ENCODE measurements at regions of chr17 and their contacts with region 1.

Region 1: DNA sequence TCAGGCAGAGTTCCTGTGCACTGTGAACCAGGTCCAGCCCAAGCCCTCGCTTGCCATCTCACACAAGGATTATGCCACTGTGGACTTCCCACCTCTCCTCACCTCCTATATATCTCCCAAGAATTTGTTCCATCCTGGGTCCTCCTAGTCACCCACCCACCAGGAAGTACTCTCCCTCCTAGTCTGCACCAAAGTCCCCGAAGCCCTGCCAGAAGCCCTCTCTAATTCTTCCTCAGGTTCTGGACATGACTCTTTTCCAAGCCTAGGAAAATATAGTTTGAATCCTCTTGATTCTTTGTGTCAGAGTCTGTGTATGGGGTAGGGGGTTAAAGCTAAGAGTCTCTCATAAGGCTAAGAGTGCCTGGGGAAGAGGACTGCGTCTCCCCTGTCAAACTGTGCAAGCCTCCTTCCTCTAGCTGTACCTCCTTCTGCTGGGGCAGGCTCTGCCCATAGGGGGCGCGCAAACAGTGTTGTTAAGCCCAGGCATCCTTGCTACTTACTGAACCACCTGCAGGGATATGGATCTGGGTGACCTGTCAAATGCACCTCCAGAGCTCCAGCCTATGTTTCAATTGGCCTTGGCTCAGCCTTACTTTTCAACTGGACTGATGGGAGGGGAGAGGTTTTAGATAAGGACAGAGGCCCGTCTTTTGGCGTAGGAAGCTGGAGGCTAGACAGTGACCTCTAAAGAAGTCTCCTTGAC is 16.6 kb upstream of the DLX4 start:
- DNase-seq: peak; percentile 66
- H3K4me3 Mint-ChIP-seq: no peak overlapping the region
- H3K27ac Mint-ChIP-seq: no peak overlapping the region
- H3K4me1 Mint-ChIP-seq: no peaks in the 10 kb centered on the region
- H3K27me3 Mint-ChIP-seq: peaks cover 13% of the 10 kb centered on the region

Region 2: DNA sequence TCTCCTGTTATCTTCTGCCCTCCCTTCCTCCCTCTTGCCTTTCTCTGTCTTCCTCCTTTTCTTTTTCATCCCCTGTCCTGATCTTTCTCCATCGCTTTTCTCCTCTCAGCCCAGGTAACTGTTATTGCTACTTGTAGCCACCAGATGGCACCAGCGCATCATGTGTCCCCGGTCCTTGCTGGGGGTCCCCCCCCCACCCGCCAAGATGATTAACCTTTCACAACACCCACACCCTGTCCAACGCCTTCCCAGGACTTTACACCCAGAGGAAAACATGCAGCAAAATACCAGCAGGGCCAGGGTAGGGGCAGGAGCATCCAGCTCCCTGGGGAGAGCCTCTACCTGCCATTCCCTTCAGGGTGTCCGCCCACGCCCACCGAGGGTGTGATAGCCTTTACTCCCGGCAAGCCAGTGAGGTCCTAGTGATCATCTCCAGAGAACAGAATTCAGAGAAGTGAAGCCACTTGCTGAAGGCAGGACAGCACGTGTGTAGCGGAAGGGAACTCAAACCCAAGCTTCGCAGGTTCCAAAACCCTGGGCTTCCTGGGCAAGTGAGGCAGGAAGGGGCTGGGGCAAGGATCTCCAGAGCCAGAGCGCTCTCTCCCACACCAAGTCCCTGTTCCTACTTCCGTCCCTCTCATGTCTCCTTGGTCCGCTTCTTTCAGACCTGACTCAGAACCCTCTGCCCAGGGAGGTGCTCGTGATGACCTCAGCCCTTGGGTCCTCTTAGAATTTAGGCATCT is 91.0 kb before region 1 on chr17:
- intact Hi-C with region 1: loop called (anchors 1 kb)
- DNase-seq: peak; percentile 20
- H3K4me3 Mint-ChIP-seq: no peak overlapping the region
- H3K27ac Mint-ChIP-seq: no peak overlapping the region
- H3K4me1 Mint-ChIP-seq: peaks cover 6% of the 10 kb centered on the region
- H3K27me3 Mint-ChIP-seq: peaks cover 2% of the 10 kb centered on the region

Region 3: GRCh38 chr17:49880291-49881053 is 71.9 kb before region 1 on chr17:
- intact Hi-C with region 1: loop called (anchors 2 kb)
- DNase-seq: peak; percentile 61
- H3K4me3 Mint-ChIP-seq: no peak overlapping the region
- H3K27ac Mint-ChIP-seq: no peak overlapping the region
- H3K4me1 Mint-ChIP-seq: peaks cover 7% of the 10 kb centered on the region
- H3K27me3 Mint-ChIP-seq: peaks cover 36% of the 10 kb centered on the region

Region 4: DNA sequence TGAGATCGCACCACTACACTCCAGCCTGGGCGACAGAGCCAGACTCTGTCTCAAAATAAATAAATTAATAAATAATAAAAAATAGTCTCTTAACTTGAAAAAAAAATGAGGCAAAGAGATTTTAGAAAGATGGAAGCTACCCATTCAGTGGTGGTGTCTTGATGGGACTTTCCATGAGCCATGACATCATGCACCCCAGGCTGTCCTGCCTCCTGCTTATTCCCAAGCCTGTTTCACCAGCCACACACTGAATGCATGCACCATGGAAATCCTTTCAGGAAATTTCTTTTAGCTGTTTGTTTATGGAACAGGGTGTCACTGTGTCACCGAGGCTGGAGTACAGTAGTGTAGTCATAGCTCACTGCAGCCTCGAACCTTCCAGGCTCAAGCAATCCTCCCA is 51.6 kb after region 1 on chr17:
- intact Hi-C with region 1: no loop called
- DNase-seq: no peak
- H3K4me3 Mint-ChIP-seq: no peak overlapping the region
- H3K27ac Mint-ChIP-seq: no peak overlapping the region
- H3K4me1 Mint-ChIP-seq: no peaks in the 10 kb centered on the region
- H3K27me3 Mint-ChIP-seq: peaks cover 28% of the 10 kb centered on the region